GM12878 (cell line): ENCODE measurements at regions of chr21 and their contacts with region 1.

Region 1: GRCh38 chr21:29271927-29272333 is 26.8 kb upstream of the BACH1 start:
- DNase-seq: no peak
- ATAC-seq: no peak
- H3K4me3 ChIP-seq: no peak overlapping the region
- H3K27ac ChIP-seq: no peak overlapping the region
- H3K4me1 ChIP-seq: no peaks in the 10 kb centered on the region
- H3K27me3 ChIP-seq: no peaks in the 10 kb centered on the region
- CTCF ChIP-seq: no peak
- EP300 ChIP-seq: no peak
- POLR2A ChIP-seq: no peak
- RAD21 ChIP-seq: no peak

Region 2: GRCh38 chr21:29187944-29188343 is 84.0 kb before region 1 on chr21:
- CTCF ChIA-PET with region 1: no interaction called
- POLR2A ChIA-PET with region 1: no interaction called
- RAD21 ChIA-PET with region 1: no interaction called
- SMC1A ChIA-PET with region 1: no interaction called
- in situ Hi-C with region 1: no loop called
- intact Hi-C with region 1: no loop called
- DNase-seq: no peak
- ATAC-seq: no peak
- H3K4me3 ChIP-seq: no peak overlapping the region
- H3K27ac ChIP-seq: no peak overlapping the region
- H3K4me1 ChIP-seq: peaks cover 7% of the 10 kb centered on the region
- H3K27me3 ChIP-seq: no peaks in the 10 kb centered on the region
- CTCF ChIP-seq: no peak
- EP300 ChIP-seq: no peak
- POLR2A ChIP-seq: no peak
- RAD21 ChIP-seq: no peak

Region 3: DNA sequence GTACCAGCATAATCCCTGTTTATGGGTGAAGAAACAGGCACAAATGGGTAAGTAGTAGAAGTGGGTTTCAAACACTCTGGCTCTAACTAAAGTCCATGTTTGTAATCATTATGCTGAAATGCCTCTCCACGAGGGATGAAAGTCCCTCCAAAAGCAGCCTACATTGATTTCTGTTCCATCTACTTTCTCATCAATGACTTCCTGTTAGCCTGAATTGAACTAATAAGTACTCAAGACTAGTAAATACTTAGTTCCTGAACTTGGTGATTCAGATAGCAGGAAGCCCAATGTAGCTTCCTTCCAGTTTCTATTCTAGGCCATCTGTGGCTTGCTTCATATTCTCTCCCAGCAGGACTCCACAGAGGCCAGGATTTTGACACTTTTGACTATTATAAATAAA is 15.5 kb after region 1 on chr21:
- CTCF ChIA-PET with region 1: interaction called, 14 read pairs
- POLR2A ChIA-PET with region 1: no interaction called
- RAD21 ChIA-PET with region 1: interaction called, 3 read pairs
- SMC1A ChIA-PET with region 1: interaction called, 12 read pairs
- in situ Hi-C with region 1: no loop called
- intact Hi-C with region 1: no loop called
- DNase-seq: no peak
- ATAC-seq: peak; percentile 33
- H3K4me3 ChIP-seq: no peak overlapping the region
- H3K27ac ChIP-seq: no peak overlapping the region
- H3K4me1 ChIP-seq: no peaks in the 10 kb centered on the region
- H3K27me3 ChIP-seq: no peaks in the 10 kb centered on the region
- CTCF ChIP-seq: no peak
- EP300 ChIP-seq: no peak
- POLR2A ChIP-seq: no peak
- RAD21 ChIP-seq: no peak

Region 4: GRCh38 chr21:29293495-29293894 is 21.6 kb after region 1 on chr21:
- CTCF ChIA-PET with region 1: interaction called, 14 read pairs
- POLR2A ChIA-PET with region 1: interaction called, 3 read pairs
- RAD21 ChIA-PET with region 1: interaction called, 3 read pairs
- SMC1A ChIA-PET with region 1: interaction called, 7 read pairs
- in situ Hi-C with region 1: no loop called
- intact Hi-C with region 1: no loop called
- DNase-seq: peak; percentile 71
- ATAC-seq: peak; percentile 95
- H3K4me3 ChIP-seq: no peak overlapping the region
- H3K27ac ChIP-seq: no peak overlapping the region
- H3K4me1 ChIP-seq: peaks cover 26% of the 10 kb centered on the region
- H3K27me3 ChIP-seq: no peaks in the 10 kb centered on the region
- CTCF ChIP-seq: no peak
- EP300 ChIP-seq: no peak
- POLR2A ChIP-seq: no peak
- RAD21 ChIP-seq: 0 out of 2 replicates have a peak, but pooled peaks have one; percentile 4